MCF 10A (cell line): ENCODE measurements at regions of chr5 and their contacts with region 1.

Region 1: DNA sequence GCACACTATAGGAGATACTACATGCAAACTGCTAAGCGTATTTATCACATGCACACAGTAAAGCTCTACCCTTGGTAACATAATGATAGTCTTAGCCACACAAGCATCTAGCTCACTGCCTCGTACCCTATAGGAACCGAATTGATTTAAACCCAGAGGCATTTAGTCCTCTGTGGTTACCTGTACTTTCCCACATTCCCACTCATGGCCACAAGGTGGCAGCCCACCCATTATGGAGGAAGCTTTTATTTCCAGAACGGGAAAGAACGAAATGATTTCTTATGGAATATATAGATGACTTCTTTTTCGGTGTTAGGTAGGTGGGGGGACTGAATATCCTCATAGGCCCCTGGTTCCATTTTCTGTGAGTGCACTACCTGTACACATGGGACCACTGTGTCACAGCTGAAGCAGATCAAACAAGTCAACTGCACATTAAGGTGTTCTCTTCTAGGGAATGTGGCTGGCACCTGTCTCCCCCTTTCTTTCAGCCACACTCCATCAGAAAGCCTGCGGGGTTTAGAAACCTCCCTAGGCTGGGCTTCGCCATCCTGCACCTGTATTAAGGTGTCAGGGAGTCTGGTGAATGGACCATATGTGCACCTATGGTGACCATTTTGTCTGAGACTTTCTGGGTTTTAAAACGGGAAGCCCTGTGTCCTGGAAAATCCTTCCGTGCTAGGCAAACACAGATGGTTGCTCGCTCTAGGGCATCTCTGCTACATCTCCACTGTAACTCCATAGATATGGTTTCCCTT is 313.2 kb downstream of the SLIT3 start:
- DNase-seq: peak; percentile 87
- H3K4me3 Mint-ChIP-seq: no peak overlapping the region
- H3K27ac Mint-ChIP-seq: no peak overlapping the region
- H3K4me1 Mint-ChIP-seq: no peaks in the 10 kb centered on the region
- H3K27me3 Mint-ChIP-seq: peaks cover 22% of the 10 kb centered on the region
- CTCF ChIP-seq: peak; percentile 93

Region 2: GRCh38 chr5:168268949-168269943 is 718.5 kb before region 1 on chr5:
- CTCF ChIA-PET with region 1: no interaction called
- POLR2A ChIA-PET with region 1: no interaction called
- intact Hi-C with region 1: loop called (anchors 2 kb)
- DNase-seq: peak; percentile 97
- H3K4me3 Mint-ChIP-seq: peak overlapping the region; percentile 71
- H3K27ac Mint-ChIP-seq: no peak overlapping the region
- H3K4me1 Mint-ChIP-seq: peaks cover 17% of the 10 kb centered on the region
- H3K27me3 Mint-ChIP-seq: no peaks in the 10 kb centered on the region
- CTCF ChIP-seq: peak; percentile 98

Region 3: DNA sequence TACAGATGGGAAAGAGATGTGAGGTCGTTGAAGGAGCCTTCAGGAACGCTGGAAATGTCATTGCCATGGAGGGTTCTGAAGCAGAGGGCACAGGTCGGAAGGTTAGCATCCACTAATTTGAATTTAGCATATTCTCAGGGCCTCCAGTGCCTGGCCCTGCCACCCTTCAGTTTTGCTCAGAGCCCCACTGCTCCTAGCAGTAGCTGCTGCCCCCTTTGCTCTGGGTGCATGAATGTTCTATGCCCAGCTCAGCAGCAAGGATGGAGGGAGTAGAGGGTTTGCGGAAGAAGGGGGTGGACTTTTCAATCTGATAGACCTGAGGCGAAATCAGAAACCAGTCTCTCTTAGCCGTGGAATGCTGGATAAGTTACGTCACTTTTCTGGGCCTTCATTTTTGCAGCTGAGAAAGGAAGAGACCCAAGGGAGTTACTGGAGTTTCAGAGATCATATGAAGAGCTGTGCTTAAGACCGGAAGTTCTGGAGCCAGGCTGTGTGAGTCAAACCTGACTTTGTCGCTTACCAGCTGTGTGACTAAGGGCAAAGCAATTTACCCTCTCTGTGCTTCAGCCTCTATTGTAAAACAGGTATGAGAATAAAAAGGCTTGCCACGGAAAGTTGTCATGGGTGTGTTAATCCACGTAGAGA is 275.3 kb before region 1 on chr5:
- CTCF ChIA-PET with region 1: interaction called, 14 read pairs
- POLR2A ChIA-PET with region 1: no interaction called
- intact Hi-C with region 1: no loop called
- DNase-seq: peak; percentile 87
- H3K4me3 Mint-ChIP-seq: no peak overlapping the region
- H3K27ac Mint-ChIP-seq: peak overlapping the region; percentile 70
- H3K4me1 Mint-ChIP-seq: peaks cover 17% of the 10 kb centered on the region
- H3K27me3 Mint-ChIP-seq: no peaks in the 10 kb centered on the region
- CTCF ChIP-seq: no peak

Region 4: GRCh38 chr5:168962306-168962705 is 25.4 kb before region 1 on chr5:
- CTCF ChIA-PET with region 1: interaction called, 17 read pairs
- POLR2A ChIA-PET with region 1: no interaction called
- intact Hi-C with region 1: no loop called
- DNase-seq: no peak
- H3K4me3 Mint-ChIP-seq: no peak overlapping the region
- H3K27ac Mint-ChIP-seq: no peak overlapping the region
- H3K4me1 Mint-ChIP-seq: no peaks in the 10 kb centered on the region
- H3K27me3 Mint-ChIP-seq: no peaks in the 10 kb centered on the region
- CTCF ChIP-seq: no peak

Region 5: GRCh38 chr5:169015991-169016390 is 28.3 kb after region 1 on chr5:
- CTCF ChIA-PET with region 1: interaction called, 30 read pairs
- POLR2A ChIA-PET with region 1: no interaction called
- intact Hi-C with region 1: no loop called
- DNase-seq: no peak
- H3K4me3 Mint-ChIP-seq: no peak overlapping the region
- H3K27ac Mint-ChIP-seq: no peak overlapping the region
- H3K4me1 Mint-ChIP-seq: no peaks in the 10 kb centered on the region
- H3K27me3 Mint-ChIP-seq: no peaks in the 10 kb centered on the region
- CTCF ChIP-seq: no peak

Region 6: DNA sequence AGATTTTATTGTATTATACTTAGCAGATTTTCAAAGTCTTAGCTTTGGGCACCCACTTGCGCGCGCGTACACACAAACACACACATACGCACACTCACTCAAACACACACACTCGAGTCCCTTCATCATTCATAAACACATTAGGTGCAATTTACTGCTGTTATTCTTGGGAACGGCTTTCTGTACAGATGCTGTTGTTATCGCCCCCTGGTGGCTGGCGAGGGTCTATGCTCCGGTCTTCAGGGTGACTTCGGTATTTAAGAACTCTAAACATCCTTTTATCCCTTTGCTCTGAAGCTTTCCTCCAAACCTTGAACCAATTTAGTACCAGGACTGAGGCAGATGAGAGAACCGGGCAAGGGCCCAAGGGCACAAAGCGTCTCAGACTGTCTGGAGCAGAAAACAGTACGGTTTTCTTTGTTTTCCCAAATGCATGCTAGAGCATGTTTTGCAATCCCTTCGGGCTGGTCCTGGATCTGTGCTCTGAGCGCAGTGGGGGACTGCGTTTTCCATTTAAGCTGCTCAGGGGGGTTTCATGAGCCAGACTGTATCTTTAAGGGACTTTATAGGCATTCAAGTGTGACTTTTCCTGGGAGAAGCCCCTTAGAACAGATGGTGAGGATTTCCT is 314.9 kb after region 1 on chr5:
- CTCF ChIA-PET with region 1: interaction called, 57 read pairs
- POLR2A ChIA-PET with region 1: no interaction called
- intact Hi-C with region 1: loop called (anchors 1 kb)
- DNase-seq: peak; percentile 86
- H3K4me3 Mint-ChIP-seq: peak overlapping the region; percentile 74
- H3K27ac Mint-ChIP-seq: no peak overlapping the region
- H3K4me1 Mint-ChIP-seq: peaks cover 19% of the 10 kb centered on the region
- H3K27me3 Mint-ChIP-seq: no peaks in the 10 kb centered on the region
- CTCF ChIP-seq: peak; percentile 95

Region 7: GRCh38 chr5:169583424-169584204 is 595.9 kb after region 1 on chr5 and contains the start of gene SPDL1:
- CTCF ChIA-PET with region 1: interaction called, 135 read pairs
- POLR2A ChIA-PET with region 1: interaction called, 5 read pairs
- intact Hi-C with region 1: loop called (anchors 1 kb)
- DNase-seq: peak; percentile 98
- H3K4me3 Mint-ChIP-seq: peak within 1 kb of the TSS; percentile 97
- H3K27ac Mint-ChIP-seq: peak within 1 kb of the TSS; percentile 98
- H3K4me1 Mint-ChIP-seq: peaks cover 30% of the 10 kb centered on the region
- H3K27me3 Mint-ChIP-seq: no peaks in the 10 kb centered on the region
- CTCF ChIP-seq: no peak
- total RNA-seq, gene SPDL1: 40.6 and 51.3 TPM in 2 replicates